ENCODE measurements at regions of chr10 and their contacts with region 1.

Region 1: GRCh38 chr10:88676283-88677060 is 12.2 kb downstream of the LIPF start:
- DNase-seq: no peak
- H3K4me3 ChIP-seq: no peak overlapping the region
- H3K27ac ChIP-seq: no peak overlapping the region
- H3K4me1 ChIP-seq: no peaks in the 10 kb centered on the region; a peak in 1 of 7 replicates
- H3K27me3 ChIP-seq: no peaks in the 10 kb centered on the region
- CTCF ChIP-seq: no peak
- EP300 ChIP-seq: no peak
- POLR2A ChIP-seq: no peak
- RAD21 ChIP-seq: no peak

Region 2: GRCh38 chr10:88538038-88538437 is 138.4 kb before region 1 on chr10:
- CTCF ChIA-PET with region 1: no interaction called
- POLR2A ChIA-PET with region 1: no interaction called
- DNase-seq: no peak
- H3K4me3 ChIP-seq: no peak overlapping the region
- H3K27ac ChIP-seq: no peak overlapping the region
- H3K4me1 ChIP-seq: no peaks in the 10 kb centered on the region
- H3K27me3 ChIP-seq: no peaks in the 10 kb centered on the region
- CTCF ChIP-seq: no peak
- EP300 ChIP-seq: no peak
- POLR2A ChIP-seq: no peak
- RAD21 ChIP-seq: no peak

Region 3: GRCh38 chr10:88687853-88688467 is 11.5 kb after region 1 on chr10:
- CTCF ChIA-PET with region 1: interaction called, 23 read pairs
- POLR2A ChIA-PET with region 1: no interaction called
- DNase-seq: no peak
- H3K4me3 ChIP-seq: no peak overlapping the region
- H3K27ac ChIP-seq: no peak overlapping the region
- H3K4me1 ChIP-seq: no peaks in the 10 kb centered on the region
- H3K27me3 ChIP-seq: peaks cover 0 to 2% (median 0%) of the 10 kb centered on the region in 4 experiments; a peak in 1 of 7 replicates
- CTCF ChIP-seq: peak in 2 of 3 experiments; percentile 45 to 50; a peak in 2 of 4 replicates
- EP300 ChIP-seq: no peak
- POLR2A ChIP-seq: no peak
- RAD21 ChIP-seq: peak; percentile 61 to 62

Measured in H1 (cell line).